Activated CD4-positive, alpha-beta T cell treated with anti-CD3 and anti-CD28 coated beads, Interleukin-2, amount 10 ng/mL, durations not matched to agents 24 days and 14 days (primary cell): ENCODE measurements at regions of chr12 and their contacts with region 1.

Region 1: DNA sequence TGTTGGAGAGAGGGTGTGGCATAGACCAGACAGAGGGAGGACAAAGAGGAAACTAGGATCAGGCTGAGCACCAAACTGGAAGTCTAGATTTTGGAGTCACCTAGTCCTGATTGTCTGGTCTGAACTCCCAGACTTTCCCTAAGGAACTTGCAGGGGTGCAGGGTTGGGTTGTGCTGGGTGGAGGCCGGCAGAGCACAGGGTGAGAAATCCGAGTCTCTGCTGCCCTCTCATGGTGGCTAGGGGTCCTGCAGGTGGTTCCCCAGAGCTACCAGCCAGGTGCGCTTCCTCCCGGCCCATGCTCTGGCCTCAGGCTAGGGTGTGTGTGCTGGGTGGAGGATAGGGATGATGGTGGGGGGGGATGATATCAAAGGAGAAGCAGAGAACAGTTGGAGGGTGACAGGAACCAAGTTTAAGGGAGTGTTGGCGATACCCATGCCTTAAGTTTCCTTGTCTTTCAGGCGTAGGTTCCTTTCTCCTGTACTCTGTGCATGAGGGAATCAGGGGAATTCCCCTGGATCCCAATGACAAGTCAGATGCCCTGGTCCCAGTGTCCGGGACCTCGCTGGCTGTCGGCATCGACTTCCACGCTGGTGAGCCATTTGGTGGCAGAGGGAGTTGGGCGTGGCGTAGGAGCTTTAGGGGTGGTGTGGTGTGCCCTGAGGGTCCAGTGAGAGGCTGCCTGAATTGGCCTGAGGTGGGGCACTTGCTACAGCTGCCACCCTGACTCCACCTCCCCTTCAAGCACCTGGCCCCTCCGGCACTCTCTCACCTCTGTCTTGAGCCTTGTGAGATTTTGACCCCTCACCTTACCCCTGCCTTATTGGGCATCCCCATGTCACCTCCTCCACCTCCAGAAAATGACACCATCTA is 33.4 kb upstream of the NXPH4 start:
- DNase-seq: peak; percentile 94
- H3K4me3 Mint-ChIP-seq: no peak overlapping the region
- H3K27ac Mint-ChIP-seq: no peak overlapping the region
- H3K4me1 Mint-ChIP-seq: peaks cover 7% of the 10 kb centered on the region
- H3K27me3 Mint-ChIP-seq: peaks cover 2% of the 10 kb centered on the region

Region 2: DNA sequence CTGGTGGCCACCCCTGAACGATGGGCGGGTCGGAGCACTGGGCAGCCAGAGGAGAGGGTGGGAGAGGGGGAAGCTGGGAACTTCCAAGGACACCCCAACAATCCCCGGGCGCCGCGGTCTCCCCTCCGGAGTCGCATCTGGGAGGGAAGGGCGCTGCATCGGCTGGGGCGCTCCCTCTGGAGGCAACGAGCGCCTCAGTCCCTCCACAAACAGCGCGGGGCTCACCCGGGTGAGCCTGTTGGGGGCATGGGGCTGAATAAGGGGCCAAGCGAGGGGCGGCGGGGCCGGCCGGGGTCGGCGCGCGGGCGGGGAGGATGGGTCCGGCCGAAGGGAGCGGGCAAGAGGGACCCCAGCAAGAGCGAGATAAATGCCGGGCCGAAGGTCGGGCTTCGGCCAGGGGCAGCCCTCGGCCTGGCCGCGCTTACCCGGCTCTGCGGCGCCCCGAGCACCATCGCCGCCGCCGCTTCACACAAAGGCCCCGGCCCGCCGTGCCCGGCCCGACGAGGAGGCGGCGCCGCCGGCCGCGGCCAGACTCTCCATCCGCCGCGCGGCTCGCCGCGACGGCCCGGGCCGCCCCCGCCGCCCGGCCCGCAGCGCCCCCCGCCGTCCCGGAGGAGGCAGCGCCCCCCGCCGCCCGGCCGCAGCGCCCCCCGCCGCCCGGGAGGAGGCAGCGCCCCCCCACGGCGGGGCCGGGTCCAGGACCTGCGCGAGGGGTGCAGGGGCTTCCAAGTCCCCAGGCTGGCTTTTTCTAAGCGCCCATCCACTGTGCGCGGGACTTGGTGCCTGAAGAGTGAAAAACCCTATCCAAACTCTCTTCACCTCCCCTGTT is 177.0 kb before region 1 on chr12 and contains the start of gene ZBTB39:
- intact Hi-C with region 1: loop called (anchors 2 kb)
- DNase-seq: peak; percentile 92
- H3K4me3 Mint-ChIP-seq: peak within 1 kb of the TSS; percentile 93
- H3K27ac Mint-ChIP-seq: peak within 1 kb of the TSS; percentile 86
- H3K4me1 Mint-ChIP-seq: peaks cover 44% of the 10 kb centered on the region
- H3K27me3 Mint-ChIP-seq: no peaks in the 10 kb centered on the region
- total RNA-seq, gene ZBTB39: 11.0 TPM in 2 replicates

Region 3: GRCh38 chr12:57069523-57069922 is 113.6 kb before region 1 on chr12:
- intact Hi-C with region 1: loop called (anchors 5 kb)
- DNase-seq: peak; percentile 90
- H3K4me3 Mint-ChIP-seq: peak overlapping the region; percentile 61
- H3K27ac Mint-ChIP-seq: peak overlapping the region; percentile 89
- H3K4me1 Mint-ChIP-seq: peaks cover 45% of the 10 kb centered on the region
- H3K27me3 Mint-ChIP-seq: no peaks in the 10 kb centered on the region

Region 4: GRCh38 chr12:57124259-57124877 is 58.8 kb before region 1 on chr12:
- intact Hi-C with region 1: loop called (anchors 1 kb)
- DNase-seq: peak; percentile 93
- H3K4me3 Mint-ChIP-seq: no peak overlapping the region
- H3K27ac Mint-ChIP-seq: no peak overlapping the region
- H3K4me1 Mint-ChIP-seq: peaks cover 4% of the 10 kb centered on the region
- H3K27me3 Mint-ChIP-seq: peaks cover 31% of the 10 kb centered on the region

Region 5: GRCh38 chr12:57621497-57622292 is 438.5 kb after region 1 on chr12:
- intact Hi-C with region 1: no loop called
- DNase-seq: peak; percentile 89
- H3K4me3 Mint-ChIP-seq: peak overlapping the region; percentile 88
- H3K27ac Mint-ChIP-seq: peak overlapping the region; percentile 43
- H3K4me1 Mint-ChIP-seq: peaks cover 22% of the 10 kb centered on the region
- H3K27me3 Mint-ChIP-seq: peaks cover 96% of the 10 kb centered on the region